ENCODE measurements at regions of chr20 and their contacts with region 1.

Region 1: GRCh38 chr20:51306503-51307358 is 235.8 kb downstream of the NFATC2 start:
- DNase-seq: peak; percentile 66 to 87 (median 80)
- H3K4me3 ChIP-seq: peak overlapping the region in 17 of 59 donors; percentile 0 to 52 (median 19)
- H3K27ac ChIP-seq: peak overlapping the region in 4 of 59 donors; percentile 12 to 41 (median 22)
- H3K27me3 ChIP-seq: peaks cover 0 to 3% (median 0%) of the 10 kb centered on the region in 45 donors
- CTCF ChIP-seq: peak; percentile 63 to 100 (median 95)

Region 2: GRCh38 chr20:51220293-51220706 is 86.4 kb before region 1 on chr20:
- intact Hi-C with region 1: loop called (anchors 1 to 10 kb)
- DNase-seq: peak in 5 of 10 donors; percentile 11 to 67 (median 35)
- H3K4me3 ChIP-seq: no peak overlapping the region
- H3K27ac ChIP-seq: no peak overlapping the region
- H3K27me3 ChIP-seq: peaks cover 0 to 22% (median 4%) of the 10 kb centered on the region in 45 donors
- CTCF ChIP-seq: peak; percentile 38 to 93 (median 83)